ENCODE measurements at regions of chr15 and their contacts with region 1.

Region 1: DNA sequence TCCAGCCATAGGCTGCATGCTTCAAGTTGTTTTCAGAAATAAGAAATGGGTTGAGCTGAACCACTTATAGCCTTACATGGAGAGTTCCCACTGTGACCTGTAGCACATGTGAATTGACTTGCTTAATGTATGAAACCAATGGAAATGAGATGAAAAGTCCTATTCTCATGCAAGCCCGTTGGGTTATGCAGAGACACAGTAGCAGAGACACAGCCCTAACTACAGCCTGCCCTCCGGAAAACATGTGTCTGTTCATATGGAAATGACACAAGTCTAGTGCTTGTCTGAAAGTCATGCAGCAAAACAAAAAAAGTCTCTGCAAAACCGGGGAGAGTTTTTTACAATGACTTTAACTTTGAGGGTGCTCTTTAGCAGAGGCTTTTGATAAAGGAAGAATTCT is 14.4 kb downstream of the HIGD2B start:
- DNase-seq: no peak
- H3K4me3 ChIP-seq: peak overlapping the region in 3 of 4 experiments; percentile 5 to 46 (median 7); a peak in 3 of 8 replicates
- H3K27ac ChIP-seq: no peak overlapping the region
- H3K4me1 ChIP-seq: peaks cover 0 to 7% (median 4%) of the 10 kb centered on the region in 4 experiments; a peak in 6 of 7 replicates
- H3K27me3 ChIP-seq: no peaks in the 10 kb centered on the region
- CTCF ChIP-seq: no peak
- EP300 ChIP-seq: no peak
- POLR2A ChIP-seq: no peak
- RAD21 ChIP-seq: no peak

Region 2: GRCh38 chr15:72685925-72686794 is 14.6 kb after region 1 on chr15 and contains the starts of genes BBS4 and HIGD2B:
- CTCF ChIA-PET with region 1: interaction called, 19 read pairs
- POLR2A ChIA-PET with region 1: interaction called, 4 read pairs
- DNase-seq: peak; percentile 86 to 93
- H3K4me3 ChIP-seq: peak within 1 kb of the TSS; percentile 71 to 94 (median 83)
- H3K27ac ChIP-seq: peak within 1 kb of the TSS; percentile 82
- H3K4me1 ChIP-seq: 0 out of 7 replicates have a peak, but pooled peaks cover 0 to 2% (median 0%) of the 10 kb centered on the region in 4 experiments
- H3K27me3 ChIP-seq: no peaks in the 10 kb centered on the region
- CTCF ChIP-seq: no peak
- EP300 ChIP-seq: 0 out of 3 replicates have a peak, but pooled peaks of 1 of the 2 experiments have one; percentile 61
- POLR2A ChIP-seq: peak; percentile 80 to 89
- RAD21 ChIP-seq: no peak
- total RNA-seq, gene BBS4: 24.1 and 24.3 TPM in 2 replicates
- total RNA-seq, gene HIGD2B: not detected in 2 replicates

Region 3: DNA sequence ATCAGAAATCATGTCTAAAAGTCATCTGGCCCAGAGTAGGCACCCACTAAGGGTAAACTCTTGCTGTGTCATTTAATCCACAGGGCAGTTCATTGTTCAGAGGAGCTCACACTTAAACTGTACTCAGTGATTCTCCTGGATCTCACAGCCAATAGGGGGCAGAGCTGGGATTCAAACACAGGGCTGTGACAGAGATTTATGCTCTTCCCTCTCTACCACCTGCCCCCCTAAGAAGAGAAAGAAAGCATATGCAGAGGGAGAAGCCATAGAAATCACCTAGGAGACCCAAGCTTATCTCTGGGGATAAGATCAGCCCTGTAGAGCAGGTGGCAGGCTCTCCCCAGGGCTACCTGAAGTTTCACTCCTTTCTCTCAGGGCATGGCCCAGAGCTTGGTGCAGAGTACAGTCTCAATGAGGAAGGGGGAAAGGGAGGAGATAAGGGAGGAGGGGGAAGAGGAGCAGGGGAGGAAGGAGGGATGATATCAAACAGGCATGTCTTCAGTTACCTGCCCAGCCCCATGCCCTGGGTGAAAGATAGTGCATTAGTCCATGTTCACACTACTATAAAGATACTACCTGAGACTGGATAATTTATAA is 163.9 kb after region 1 on chr15:
- CTCF ChIA-PET with region 1: no interaction called
- POLR2A ChIA-PET with region 1: no interaction called
- DNase-seq: peak in 1 of 2 experiments; percentile 59
- H3K4me3 ChIP-seq: no peak overlapping the region
- H3K27ac ChIP-seq: no peak overlapping the region
- H3K4me1 ChIP-seq: peaks cover 0 to 4% (median 0%) of the 10 kb centered on the region in 4 experiments; a peak in 1 of 7 replicates
- H3K27me3 ChIP-seq: no peaks in the 10 kb centered on the region
- CTCF ChIP-seq: peak in 2 of 3 experiments; percentile 55 to 73; a peak in 3 of 4 replicates
- EP300 ChIP-seq: no peak
- POLR2A ChIP-seq: no peak
- RAD21 ChIP-seq: peak; percentile 63 to 73

Measured in H1 (cell line).